Testis (tissue), 5 donors: ENCODE measurements at regions of chr2 and their contacts with region 1.

Region 1: DNA sequence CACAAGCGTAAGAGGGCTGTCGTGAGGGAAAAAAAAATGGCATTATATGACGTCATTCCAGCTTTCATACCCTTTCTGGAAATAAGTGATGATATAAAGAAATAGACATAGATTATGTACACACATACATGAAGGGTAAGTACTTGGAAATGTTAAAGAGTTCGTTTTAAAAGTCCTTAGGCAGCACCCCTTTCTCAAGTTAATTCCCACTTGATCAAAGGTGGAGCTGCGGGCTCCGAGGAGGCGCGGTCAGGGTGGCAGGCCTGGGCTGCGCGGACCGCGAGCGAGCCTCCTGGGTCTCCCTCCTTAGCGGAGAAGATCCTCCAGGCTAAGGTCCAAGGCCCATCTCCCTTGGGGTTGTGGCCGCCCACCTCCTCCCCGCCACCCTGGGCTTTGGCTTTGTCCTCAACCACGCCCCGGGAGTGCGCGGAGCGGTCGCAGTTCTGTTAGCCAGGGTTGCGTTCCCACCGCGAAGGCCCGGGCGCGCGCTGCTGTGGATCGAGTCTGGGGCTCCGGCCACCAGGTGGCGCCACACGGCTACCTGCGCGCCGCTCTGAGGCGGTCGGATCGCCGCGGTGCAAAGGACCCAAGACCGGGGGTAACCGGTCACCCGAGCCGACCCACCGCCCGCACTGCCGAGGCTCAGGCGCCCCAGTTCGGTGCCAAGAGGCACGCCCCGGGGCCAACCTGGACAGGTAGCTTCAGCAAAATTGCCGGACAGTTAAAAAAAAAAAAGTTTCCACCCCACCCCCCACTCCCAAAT is 66.8 kb downstream of the HNRNPLL start:
- DNase-seq: peak; percentile 93
- H3K4me3 ChIP-seq: peak overlapping the region; percentile 54 to 74
- H3K27ac ChIP-seq: peak overlapping the region in 1 of 2 donors; percentile 59
- H3K4me1 ChIP-seq: peaks cover 10% of the 10 kb centered on the region
- H3K27me3 ChIP-seq: no peaks in the 10 kb centered on the region
- CTCF ChIP-seq: peak; percentile 94 to 96 (median 95)
- POLR2A ChIP-seq: no peak

Region 2: DNA sequence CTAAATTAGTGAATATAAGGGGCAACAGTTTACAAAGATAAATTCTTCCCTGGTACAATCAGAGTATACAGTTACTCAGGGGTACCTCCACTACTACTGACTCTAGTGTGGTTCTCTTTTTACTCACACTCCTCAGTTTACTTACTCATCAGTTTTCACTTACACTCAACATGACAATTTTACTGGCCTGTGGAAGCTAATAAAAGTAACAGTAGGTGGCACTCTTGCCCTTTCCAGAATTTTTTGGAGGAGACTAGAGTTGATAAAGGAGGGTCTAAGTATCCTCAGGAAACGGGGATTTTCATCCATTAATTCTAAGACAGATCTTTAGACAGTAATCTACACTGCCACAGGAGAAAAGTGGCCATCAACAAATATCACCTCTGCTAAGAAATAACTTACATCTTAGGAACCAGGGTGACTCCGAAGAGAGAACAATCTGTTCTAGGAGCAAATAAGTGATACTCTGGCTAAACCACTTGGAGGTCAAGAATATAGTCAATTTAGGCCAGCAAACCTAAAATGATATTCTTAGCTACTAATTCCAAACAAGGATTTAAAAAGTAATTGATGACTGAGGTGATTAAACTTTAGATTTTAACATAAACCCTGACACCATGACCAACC is 220.1 kb before region 1 on chr2:
- intact Hi-C with region 1: loop called (anchors 10 kb)
- DNase-seq: no peak
- H3K4me3 ChIP-seq: no peak overlapping the region
- H3K27ac ChIP-seq: no peak overlapping the region
- H3K4me1 ChIP-seq: no peaks in the 10 kb centered on the region
- H3K27me3 ChIP-seq: no peaks in the 10 kb centered on the region
- CTCF ChIP-seq: peak; percentile 23 to 55 (median 47)
- POLR2A ChIP-seq: no peak

Region 3: GRCh38 chr2:38619458-38620164 is 83.7 kb after region 1 on chr2:
- intact Hi-C with region 1: no loop called
- DNase-seq: no peak
- H3K4me3 ChIP-seq: no peak overlapping the region
- H3K27ac ChIP-seq: peak overlapping the region in 1 of 2 donors; percentile 1
- H3K4me1 ChIP-seq: no peaks in the 10 kb centered on the region
- H3K27me3 ChIP-seq: no peaks in the 10 kb centered on the region
- CTCF ChIP-seq: no peak
- POLR2A ChIP-seq: no peak

Region 4: DNA sequence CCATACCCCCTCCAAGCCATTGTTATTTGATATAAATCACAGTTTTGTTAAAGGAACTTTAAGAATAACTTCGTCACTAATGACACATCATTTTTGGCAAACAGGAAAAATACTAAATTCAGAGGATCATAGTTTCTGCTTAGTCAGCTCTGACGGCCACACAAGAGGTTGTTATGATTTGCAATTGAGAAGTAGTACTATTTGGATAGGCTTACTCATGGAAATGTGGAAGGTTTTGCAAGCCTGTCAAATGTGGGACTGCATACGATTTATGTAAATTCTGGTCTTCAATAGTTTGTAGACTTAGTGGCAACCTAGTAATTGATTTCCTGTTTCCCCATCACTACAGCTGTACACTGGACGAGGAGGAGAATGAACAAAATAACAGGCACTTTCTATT is 461.9 kb after region 1 on chr2:
- intact Hi-C with region 1: no loop called
- DNase-seq: no peak
- H3K4me3 ChIP-seq: no peak overlapping the region
- H3K27ac ChIP-seq: no peak overlapping the region
- H3K4me1 ChIP-seq: no peaks in the 10 kb centered on the region
- H3K27me3 ChIP-seq: no peaks in the 10 kb centered on the region
- CTCF ChIP-seq: no peak
- POLR2A ChIP-seq: no peak